Caco-2 (cell line): ENCODE measurements at regions of chr17 and their contacts with region 1.

Region 1: DNA sequence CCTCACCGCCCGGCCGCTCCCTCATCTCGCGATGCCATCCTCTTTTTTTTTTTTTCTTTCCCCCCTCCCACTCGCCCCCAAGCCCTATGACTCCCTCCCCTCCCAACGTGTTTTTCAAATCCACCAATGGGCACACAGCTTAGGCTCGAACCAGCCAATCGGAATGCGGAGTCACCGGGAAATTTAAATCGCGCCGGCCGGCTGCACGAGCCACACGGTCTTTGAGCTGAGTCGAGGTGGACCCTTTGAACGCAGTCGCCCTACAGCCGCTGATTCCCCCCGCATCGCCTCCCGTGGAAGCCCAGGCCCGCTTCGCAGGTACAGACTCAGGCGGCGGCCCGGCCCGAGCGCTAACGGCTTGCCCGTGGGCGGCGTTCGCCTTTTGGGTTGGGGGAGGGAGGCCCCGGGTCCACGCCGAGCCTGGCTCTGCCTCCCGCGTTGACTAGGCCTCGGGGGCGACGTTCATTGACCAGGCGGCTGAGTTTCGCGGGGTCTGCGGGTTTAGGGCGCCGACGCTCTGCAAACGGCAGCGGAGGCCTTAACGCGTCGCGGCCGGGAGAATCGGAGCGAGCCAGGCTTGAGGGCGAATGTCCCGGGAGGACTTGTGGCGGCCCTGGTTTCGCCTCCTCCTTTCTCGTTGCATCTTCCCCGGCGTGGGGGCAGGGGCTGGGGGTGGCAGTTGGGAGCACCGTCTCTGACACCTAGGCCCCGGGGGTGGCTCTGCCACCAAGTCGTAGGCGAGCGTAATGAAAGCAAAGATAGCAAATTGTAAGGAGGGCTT is at the start of gene KPNA2:
- DNase-seq: peak; percentile 97 to 98
- H3K4me3 ChIP-seq: peak within 1 kb of the TSS; percentile 92
- H3K4me3 Mint-ChIP-seq: peak within 1 kb of the TSS; percentile 89
- H3K27ac Mint-ChIP-seq: peak within 1 kb of the TSS; percentile 94
- H3K4me1 ChIP-seq: 0 out of 2 replicates have a peak, but pooled peaks cover 5% of the 10 kb centered on the region
- H3K4me1 Mint-ChIP-seq: peaks cover 6% of the 10 kb centered on the region
- H3K27me3 ChIP-seq: no peaks in the 10 kb centered on the region
- H3K27me3 Mint-ChIP-seq: no peaks in the 10 kb centered on the region
- CTCF ChIP-seq: no peak
- total RNA-seq, gene KPNA2: 324 and 339 TPM in 2 replicates

Region 2: DNA sequence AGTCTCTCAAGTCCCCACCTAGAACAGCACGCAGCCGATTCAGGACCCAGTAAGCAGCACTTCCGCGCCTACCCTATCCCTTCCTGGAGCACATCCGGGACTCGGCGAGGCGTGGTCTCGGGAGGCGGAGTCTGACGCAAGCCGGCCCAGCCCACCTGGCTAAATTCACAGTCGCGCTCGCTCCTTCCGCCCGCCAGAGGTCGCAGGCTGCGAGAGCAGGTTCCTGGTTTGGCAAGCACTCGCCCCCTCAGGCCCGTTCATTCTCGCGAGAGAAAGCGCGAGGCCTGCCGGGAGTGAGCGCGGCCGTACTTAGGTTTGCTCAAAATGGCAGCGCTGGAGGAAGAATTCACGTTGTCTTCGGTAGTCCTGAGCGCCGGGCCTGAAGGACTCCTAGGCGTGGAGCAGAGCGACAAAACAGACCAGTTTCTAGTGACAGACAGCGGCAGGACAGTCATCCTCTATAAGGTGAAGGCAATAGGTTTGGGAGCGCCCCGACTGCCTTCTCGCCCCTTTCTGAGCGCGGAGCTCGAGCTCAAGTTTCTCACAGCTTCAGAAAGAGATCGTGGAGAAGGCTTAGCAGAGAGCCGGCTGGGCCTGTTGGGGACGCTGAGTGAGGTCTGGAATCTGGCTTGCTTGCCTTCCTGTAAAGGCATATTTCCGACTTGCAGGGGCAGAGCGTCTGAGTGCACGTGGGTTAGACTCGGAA is 317.9 kb before region 1 on chr17 and contains the start of gene NOL11:
- CTCF ChIA-PET with region 1: no interaction called
- POLR2A ChIA-PET with region 1: interaction called, 15 read pairs
- intact Hi-C with region 1: no loop called
- DNase-seq: peak; percentile 99
- H3K4me3 ChIP-seq: peak within 1 kb of the TSS; percentile 65
- H3K4me3 Mint-ChIP-seq: peak within 1 kb of the TSS; percentile 99
- H3K27ac Mint-ChIP-seq: peak within 1 kb of the TSS; percentile 100
- H3K4me1 ChIP-seq: peaks cover 7% of the 10 kb centered on the region; the same call in 1 of the 2 replicates
- H3K4me1 Mint-ChIP-seq: no peaks in the 10 kb centered on the region
- H3K27me3 ChIP-seq: no peaks in the 10 kb centered on the region
- H3K27me3 Mint-ChIP-seq: no peaks in the 10 kb centered on the region
- CTCF ChIP-seq: peak; percentile 86 to 98
- total RNA-seq, gene NOL11: 69.0 and 73.6 TPM in 2 replicates

Region 3: GRCh38 chr17:67868176-67868575 is 167.5 kb before region 1 on chr17:
- CTCF ChIA-PET with region 1: no interaction called
- POLR2A ChIA-PET with region 1: no interaction called
- intact Hi-C with region 1: no loop called
- DNase-seq: no peak
- H3K4me3 ChIP-seq: no peak overlapping the region
- H3K4me3 Mint-ChIP-seq: no peak overlapping the region
- H3K27ac Mint-ChIP-seq: no peak overlapping the region
- H3K4me1 ChIP-seq: no peaks in the 10 kb centered on the region
- H3K4me1 Mint-ChIP-seq: no peaks in the 10 kb centered on the region
- H3K27me3 ChIP-seq: no peaks in the 10 kb centered on the region
- H3K27me3 Mint-ChIP-seq: no peaks in the 10 kb centered on the region
- CTCF ChIP-seq: no peak

Region 4: GRCh38 chr17:68019675-68020408 is 15.9 kb before region 1 on chr17:
- CTCF ChIA-PET with region 1: interaction called, 5 read pairs
- POLR2A ChIA-PET with region 1: interaction called, 12 read pairs
- intact Hi-C with region 1: loop called (anchors 1 kb)
- DNase-seq: peak; percentile 96 to 99
- H3K4me3 ChIP-seq: peak overlapping the region; percentile 63
- H3K4me3 Mint-ChIP-seq: peak overlapping the region; percentile 92
- H3K27ac Mint-ChIP-seq: peak overlapping the region; percentile 96
- H3K4me1 ChIP-seq: 0 out of 2 replicates have a peak, but pooled peaks cover 4% of the 10 kb centered on the region
- H3K4me1 Mint-ChIP-seq: peaks cover 9% of the 10 kb centered on the region
- H3K27me3 ChIP-seq: no peaks in the 10 kb centered on the region
- H3K27me3 Mint-ChIP-seq: peaks cover 3% of the 10 kb centered on the region
- CTCF ChIP-seq: peak; percentile 43 to 70

Region 5: GRCh38 chr17:68101075-68101992 is 65.6 kb after region 1 on chr17:
- CTCF ChIA-PET with region 1: no interaction called
- POLR2A ChIA-PET with region 1: interaction called, 4 read pairs
- intact Hi-C with region 1: loop called (anchors 5 kb)
- DNase-seq: peak; percentile 96
- H3K4me3 ChIP-seq: peak overlapping the region; percentile 69
- H3K4me3 Mint-ChIP-seq: peak overlapping the region; percentile 87
- H3K27ac Mint-ChIP-seq: peak overlapping the region; percentile 90
- H3K4me1 ChIP-seq: peaks cover 13% of the 10 kb centered on the region; the same call in 1 of the 2 replicates
- H3K4me1 Mint-ChIP-seq: peaks cover 15% of the 10 kb centered on the region
- H3K27me3 ChIP-seq: no peaks in the 10 kb centered on the region
- H3K27me3 Mint-ChIP-seq: no peaks in the 10 kb centered on the region
- CTCF ChIP-seq: no peak

Region 6: GRCh38 chr17:68457539-68458259 is 422.0 kb after region 1 on chr17:
- CTCF ChIA-PET with region 1: interaction called, 3 read pairs
- POLR2A ChIA-PET with region 1: interaction called, 14 read pairs
- intact Hi-C with region 1: no loop called
- DNase-seq: peak; percentile 99 to 100
- H3K4me3 ChIP-seq: peak overlapping the region; percentile 59
- H3K4me3 Mint-ChIP-seq: peak overlapping the region; percentile 95
- H3K27ac Mint-ChIP-seq: peak overlapping the region; percentile 84
- H3K4me1 ChIP-seq: peaks cover 16% of the 10 kb centered on the region; the same call in 1 of the 2 replicates
- H3K4me1 Mint-ChIP-seq: peaks cover 13% of the 10 kb centered on the region
- H3K27me3 ChIP-seq: no peaks in the 10 kb centered on the region
- H3K27me3 Mint-ChIP-seq: peaks cover 3% of the 10 kb centered on the region
- CTCF ChIP-seq: no peak